ENCODE measurements at regions of chr18 and their contacts with region 1.

Region 1: GRCh38 chr18:3665780-3666525 is 216.0 kb downstream of the TGIF1 start:
- DNase-seq: peak; percentile 94
- H3K4me3 ChIP-seq: peak overlapping the region; percentile 26 to 38 (median 36)
- H3K27ac ChIP-seq: peak overlapping the region; percentile 59 to 68 (median 64)
- H3K4me1 ChIP-seq: peaks cover 5 to 11% (median 9%) of the 10 kb centered on the region in 4 donors
- H3K27me3 ChIP-seq: no peaks in the 10 kb centered on the region
- CTCF ChIP-seq: peak; percentile 96 to 99 (median 96)
- EP300 ChIP-seq: no peak
- POLR2A ChIP-seq: no peak

Region 2: DNA sequence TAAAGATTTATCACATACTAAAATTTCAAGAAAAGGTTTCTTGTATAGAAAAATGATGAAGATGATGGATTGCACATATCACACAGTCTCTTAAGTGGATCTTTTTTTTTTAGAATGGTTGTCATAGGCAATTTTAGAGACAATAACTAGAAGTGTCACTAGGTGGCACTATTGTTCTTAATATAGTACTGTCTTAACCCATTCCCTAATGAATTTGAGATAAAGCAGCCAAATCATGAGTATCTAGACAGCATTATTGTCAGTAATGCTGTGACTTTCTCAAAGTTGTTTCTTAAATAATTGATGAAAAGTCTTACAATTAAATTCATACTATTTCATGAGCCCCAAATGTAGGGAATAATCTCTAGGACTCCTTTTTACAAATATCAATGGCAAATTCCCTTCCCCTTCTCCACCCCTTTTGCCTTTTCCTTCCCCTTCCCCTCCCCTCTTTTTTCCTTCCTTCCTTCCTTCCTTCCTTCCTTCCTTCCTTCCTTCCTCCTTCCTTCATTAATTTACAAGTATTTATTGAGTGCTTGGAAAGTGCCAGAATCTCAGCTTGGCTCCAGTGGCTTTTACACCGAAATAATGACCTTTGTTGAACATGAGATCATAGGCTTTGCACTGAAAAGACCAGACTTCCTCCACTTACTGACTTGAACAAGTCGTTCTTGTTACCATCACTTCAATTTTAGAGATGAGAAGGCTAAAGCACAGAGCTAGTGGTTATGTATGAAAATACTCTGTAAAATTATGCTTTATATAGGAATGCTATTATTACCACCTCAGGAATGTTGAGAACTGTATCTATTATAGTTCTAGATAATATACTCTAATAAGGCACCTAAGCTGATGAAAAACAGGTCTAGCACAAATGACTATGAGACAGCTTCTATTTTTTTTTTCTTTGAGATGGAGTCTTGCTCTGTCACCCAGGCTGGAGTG is 384.2 kb before region 1 on chr18:
- intact Hi-C with region 1: loop called (anchors 1 kb)
- DNase-seq: no peak
- H3K4me3 ChIP-seq: no peak overlapping the region
- H3K27ac ChIP-seq: peak overlapping the region in 3 of 4 donors; percentile 19 to 49 (median 23)
- H3K4me1 ChIP-seq: peaks cover 0 to 8% (median 6%) of the 10 kb centered on the region in 4 donors
- H3K27me3 ChIP-seq: no peaks in the 10 kb centered on the region
- CTCF ChIP-seq: peak; percentile 68 to 74 (median 72)
- EP300 ChIP-seq: no peak
- POLR2A ChIP-seq: no peak

Region 3: DNA sequence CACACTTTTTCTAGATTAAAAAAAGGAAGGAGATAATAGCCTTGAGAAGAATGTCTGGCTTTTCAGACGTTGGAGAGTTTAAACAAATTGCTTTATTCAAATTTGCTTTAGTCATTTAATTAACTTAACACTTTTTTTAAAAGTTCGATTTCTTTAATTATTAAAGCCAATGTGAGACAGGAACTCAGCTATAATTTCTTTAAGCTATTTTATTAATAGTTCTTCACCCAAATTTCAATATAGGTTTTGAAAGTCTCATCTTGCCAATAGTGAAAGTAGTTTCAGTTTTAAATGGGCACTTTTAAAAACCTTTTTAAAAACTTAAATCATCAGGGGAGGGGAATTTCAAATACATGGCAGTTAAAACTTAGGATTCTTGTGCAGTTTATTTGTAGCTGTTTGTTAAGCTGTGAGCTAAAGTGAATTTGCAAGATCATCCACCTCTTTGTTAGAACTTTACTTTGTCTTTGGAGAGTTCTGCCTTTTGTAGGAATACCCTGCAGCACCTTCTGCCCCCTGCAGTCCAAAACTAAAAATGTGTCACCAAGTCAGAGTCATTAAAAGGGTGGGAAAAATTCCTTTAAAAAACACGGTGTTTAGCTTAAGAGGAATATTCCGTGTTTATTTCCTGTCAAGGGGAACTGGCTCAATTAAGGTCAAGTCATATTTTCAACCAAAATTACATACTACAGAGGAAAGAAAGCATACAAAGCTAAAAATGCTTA is 211.4 kb before region 1 on chr18:
- intact Hi-C with region 1: loop called (anchors 5 kb)
- DNase-seq: peak; percentile 82
- H3K4me3 ChIP-seq: peak overlapping the region; percentile 69 to 96 (median 90)
- H3K27ac ChIP-seq: peak overlapping the region; percentile 98 to 100 (median 98)
- H3K4me1 ChIP-seq: peaks cover 24 to 63% (median 53%) of the 10 kb centered on the region in 4 donors
- H3K27me3 ChIP-seq: no peaks in the 10 kb centered on the region
- CTCF ChIP-seq: peak; percentile 71 to 79 (median 76)
- EP300 ChIP-seq: no peak
- POLR2A ChIP-seq: no peak

Region 4: GRCh38 chr18:3593904-3594661 is 71.9 kb before region 1 on chr18:
- intact Hi-C with region 1: loop called (anchors 2 kb)
- DNase-seq: peak; percentile 98
- H3K4me3 ChIP-seq: peak overlapping the region; percentile 53 to 62 (median 56)
- H3K27ac ChIP-seq: peak overlapping the region; percentile 89 to 97 (median 96)
- H3K4me1 ChIP-seq: peaks cover 46 to 53% (median 52%) of the 10 kb centered on the region in 4 donors
- H3K27me3 ChIP-seq: no peaks in the 10 kb centered on the region
- CTCF ChIP-seq: peak; percentile 83 to 90 (median 89)
- EP300 ChIP-seq: peak; percentile 58
- POLR2A ChIP-seq: no peak

Region 5: DNA sequence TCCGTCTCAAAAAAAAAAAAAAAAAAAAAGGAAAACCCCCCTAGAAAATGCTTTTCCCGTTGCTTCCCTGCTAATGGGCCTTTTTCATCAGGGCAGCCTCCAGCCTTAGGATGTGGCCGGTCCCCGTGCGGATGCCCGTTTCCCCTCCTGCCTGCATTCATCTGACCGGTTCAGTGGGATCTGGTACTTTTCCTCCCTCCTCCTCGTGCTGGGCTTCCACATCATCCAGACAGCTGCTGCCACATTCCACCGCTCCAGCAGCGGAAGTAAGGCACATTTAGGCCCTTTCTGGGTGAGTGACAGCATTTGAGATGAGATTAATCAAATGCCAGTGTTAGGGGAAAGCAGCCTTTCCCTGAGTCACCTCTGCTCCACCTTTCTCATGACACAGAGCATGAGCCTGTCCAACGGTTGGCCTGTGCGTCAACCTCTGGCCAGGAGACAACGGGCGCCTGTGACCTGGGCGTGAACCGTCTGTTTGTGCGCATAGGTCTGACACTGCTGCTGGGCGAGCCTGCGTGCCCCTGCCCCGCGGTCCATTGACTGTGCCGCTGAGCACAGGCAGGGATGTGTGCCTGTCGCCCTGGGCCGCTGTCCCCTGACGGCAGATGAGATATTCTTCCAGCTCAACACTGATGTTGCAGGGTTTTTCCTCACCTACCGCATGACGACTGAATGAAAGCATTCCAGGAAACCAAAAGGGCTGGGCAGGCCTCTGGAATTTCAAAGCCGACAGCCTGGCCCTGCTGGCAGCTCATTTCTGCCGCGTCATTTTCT is 42.0 kb before region 1 on chr18:
- intact Hi-C with region 1: loop called (anchors 2 kb)
- DNase-seq: no peak
- H3K4me3 ChIP-seq: peak overlapping the region; percentile 1 to 24 (median 12)
- H3K27ac ChIP-seq: peak overlapping the region; percentile 68 to 86 (median 84)
- H3K4me1 ChIP-seq: peaks cover 26 to 38% (median 37%) of the 10 kb centered on the region in 4 donors
- H3K27me3 ChIP-seq: no peaks in the 10 kb centered on the region
- CTCF ChIP-seq: no peak
- EP300 ChIP-seq: peak; percentile 37
- POLR2A ChIP-seq: no peak

Measured in esophagus muscularis mucosa (tissue), 4 donors.